CD4-positive, alpha-beta T cell (primary cell): ENCODE measurements at regions of chr9 and their contacts with region 1.

Region 1: DNA sequence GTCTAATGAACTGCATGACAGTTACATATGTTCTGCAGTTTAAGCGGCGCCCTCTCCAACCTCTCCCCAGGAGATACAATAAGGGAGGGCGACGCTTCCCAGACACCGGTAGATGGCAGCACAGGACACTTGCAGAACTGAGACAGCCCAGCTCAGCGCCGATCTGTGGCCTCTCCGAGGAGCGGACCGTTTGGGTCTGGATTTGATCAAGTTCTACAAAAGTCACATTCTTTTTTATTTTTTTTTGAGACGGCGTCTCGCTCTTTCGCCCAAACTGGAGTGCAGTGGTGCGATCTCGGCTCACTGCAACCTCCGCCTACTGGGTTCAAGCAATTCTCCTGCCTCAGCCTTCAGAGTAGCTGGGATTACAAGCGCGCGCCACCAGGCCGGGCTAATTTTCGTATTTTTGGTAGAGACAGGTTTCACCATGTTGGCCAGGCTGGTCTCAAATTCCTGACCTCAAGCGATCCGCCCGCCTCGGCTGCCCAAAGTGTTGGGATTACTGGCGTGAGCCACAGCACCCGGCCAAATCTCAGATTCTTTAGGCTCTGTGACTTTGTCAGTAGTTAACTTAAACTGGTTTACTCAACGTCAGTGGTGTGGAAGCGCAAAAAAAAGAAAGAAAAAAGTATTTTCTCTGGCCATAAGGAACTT is 1.4 kb upstream of the ATOSB start:
- DNase-seq: peak; percentile 77 to 96 (median 84)
- ATAC-seq: peak; percentile 67
- H3K4me3 ChIP-seq: peak overlapping the region; percentile 66
- H3K4me3 Mint-ChIP-seq: peak overlapping the region; percentile 94
- H3K27ac ChIP-seq: peak overlapping the region; percentile 81 to 83
- H3K27ac Mint-ChIP-seq: peak overlapping the region; percentile 79
- H3K4me1 ChIP-seq: peaks cover 46% of the 10 kb centered on the region
- H3K4me1 Mint-ChIP-seq: peaks cover 42% of the 10 kb centered on the region
- H3K27me3 ChIP-seq: no peaks in the 10 kb centered on the region
- H3K27me3 Mint-ChIP-seq: no peaks in the 10 kb centered on the region
- CTCF ChIP-seq: peak; percentile 90

Region 2: DNA sequence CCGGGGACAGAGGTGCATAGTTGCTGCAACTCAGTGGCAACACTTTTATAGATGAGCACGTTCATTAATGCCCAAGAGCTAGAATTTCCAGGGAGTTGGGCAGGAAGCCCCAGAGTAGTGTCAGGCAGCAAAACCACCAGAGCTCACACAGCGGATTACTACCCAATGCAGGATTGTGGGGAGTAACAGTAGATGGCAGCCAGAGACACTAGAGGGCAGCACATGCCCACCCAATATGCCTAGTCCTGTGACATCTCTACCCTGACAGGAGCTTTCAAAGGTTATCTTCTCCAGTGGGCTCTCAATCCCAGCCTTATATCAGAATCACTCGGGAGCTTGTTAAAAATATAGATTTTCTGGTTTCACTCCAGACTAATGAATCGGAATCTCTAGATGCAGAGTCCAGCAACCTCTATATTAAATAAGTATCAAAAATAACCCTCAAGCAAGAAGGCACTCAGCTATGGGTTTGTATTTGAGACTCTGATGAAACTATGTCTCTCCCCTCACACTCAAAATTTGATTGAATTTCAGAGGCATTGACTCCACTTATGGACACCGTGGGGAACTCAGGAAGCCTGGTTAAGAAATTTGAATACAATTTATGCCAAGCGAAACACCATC is 217.4 kb before region 1 on chr9:
- CTCF ChIA-PET with region 1: interaction called, 10 read pairs
- POLR2A ChIA-PET with region 1: no interaction called
- intact Hi-C with region 1: no loop called
- DNase-seq: peak; percentile 67 to 90 (median 76)
- ATAC-seq: peak; percentile 100
- H3K4me3 ChIP-seq: no peak overlapping the region
- H3K4me3 Mint-ChIP-seq: no peak overlapping the region
- H3K27ac ChIP-seq: no peak overlapping the region
- H3K27ac Mint-ChIP-seq: no peak overlapping the region
- H3K4me1 ChIP-seq: no peaks in the 10 kb centered on the region
- H3K4me1 Mint-ChIP-seq: no peaks in the 10 kb centered on the region
- H3K27me3 ChIP-seq: peaks cover 7 to 20% of the 10 kb centered on the region in 2 experiments
- H3K27me3 Mint-ChIP-seq: peaks cover 57% of the 10 kb centered on the region
- CTCF ChIP-seq: peak; percentile 88

Region 3: DNA sequence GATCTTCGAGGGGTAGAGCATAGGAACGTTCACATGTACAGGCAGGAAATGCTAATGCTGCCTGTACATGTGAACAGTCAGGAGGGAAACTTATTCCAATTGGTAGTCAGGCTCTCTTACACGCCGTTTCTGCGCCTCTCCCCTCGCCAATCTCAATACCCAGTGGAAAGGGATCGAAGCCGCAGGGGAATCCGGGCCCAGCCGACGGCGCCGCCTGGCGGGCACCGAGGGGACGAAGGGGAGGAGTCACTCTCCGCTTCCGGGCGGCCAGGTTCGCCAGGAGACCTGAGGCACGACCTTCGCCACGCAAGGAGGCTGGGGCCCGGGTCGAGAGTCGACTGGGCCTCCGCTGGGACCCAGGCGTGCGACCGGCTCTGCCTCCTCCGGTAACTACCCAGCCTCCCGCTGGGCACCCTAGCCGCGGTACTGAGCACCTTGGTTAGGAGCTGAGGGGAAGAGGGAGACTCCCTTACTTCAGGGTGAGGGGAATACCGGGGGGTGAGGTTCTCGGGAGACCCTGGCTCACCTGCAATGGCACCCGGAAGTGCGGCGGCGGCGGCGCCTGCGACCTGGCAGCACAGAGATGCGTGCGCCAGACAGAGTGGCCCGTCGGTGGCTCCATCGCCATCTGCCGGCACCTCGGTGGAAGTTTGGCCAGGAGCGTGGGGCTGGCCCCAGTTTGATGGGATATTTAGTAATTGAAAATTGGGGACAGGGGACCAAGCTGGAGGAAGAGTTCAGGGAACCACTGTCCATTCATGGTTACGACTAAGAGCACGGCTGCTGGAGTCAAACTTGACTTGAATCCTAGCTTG is 20.8 kb before region 1 on chr9 and contains the start of gene PIGO:
- CTCF ChIA-PET with region 1: interaction called, 15 read pairs
- POLR2A ChIA-PET with region 1: interaction called, 13 read pairs
- intact Hi-C with region 1: no loop called
- DNase-seq: peak; percentile 81 to 95 (median 88)
- ATAC-seq: peak; percentile 88
- H3K4me3 ChIP-seq: peak within 1 kb of the TSS; percentile 82
- H3K4me3 Mint-ChIP-seq: peak within 1 kb of the TSS; percentile 92
- H3K27ac ChIP-seq: peak within 1 kb of the TSS; percentile 96 to 99
- H3K27ac Mint-ChIP-seq: peak within 1 kb of the TSS; percentile 93
- H3K4me1 ChIP-seq: peaks cover 26% of the 10 kb centered on the region
- H3K4me1 Mint-ChIP-seq: peaks cover 43% of the 10 kb centered on the region
- H3K27me3 ChIP-seq: no peaks in the 10 kb centered on the region
- H3K27me3 Mint-ChIP-seq: no peaks in the 10 kb centered on the region
- CTCF ChIP-seq: peak; percentile 81
- total RNA-seq, gene PIGO: 17.5 to 18.9 TPM

Region 4: GRCh38 chr9:35258676-35259474 is 141.8 kb after region 1 on chr9:
- CTCF ChIA-PET with region 1: interaction called, 17 read pairs
- POLR2A ChIA-PET with region 1: interaction called, 8 read pairs
- intact Hi-C with region 1: loop called (anchors 1 kb)
- DNase-seq: peak; percentile 17 to 67 (median 34)
- ATAC-seq: peak; percentile 43
- H3K4me3 ChIP-seq: no peak overlapping the region
- H3K4me3 Mint-ChIP-seq: no peak overlapping the region
- H3K27ac ChIP-seq: no peak overlapping the region
- H3K27ac Mint-ChIP-seq: no peak overlapping the region
- H3K4me1 ChIP-seq: no peaks in the 10 kb centered on the region
- H3K4me1 Mint-ChIP-seq: no peaks in the 10 kb centered on the region
- H3K27me3 ChIP-seq: peaks cover 0 to 3% of the 10 kb centered on the region in 2 experiments
- H3K27me3 Mint-ChIP-seq: peaks cover 11% of the 10 kb centered on the region
- CTCF ChIP-seq: peak; percentile 64

Region 5: GRCh38 chr9:35603987-35604577 is 487.1 kb after region 1 on chr9:
- CTCF ChIA-PET with region 1: no interaction called
- POLR2A ChIA-PET with region 1: no interaction called
- intact Hi-C with region 1: loop called (anchors 5 kb)
- DNase-seq: peak; percentile 98 to 100 (median 99)
- ATAC-seq: peak; percentile 88
- H3K4me3 ChIP-seq: peak overlapping the region; percentile 94
- H3K4me3 Mint-ChIP-seq: peak overlapping the region; percentile 99
- H3K27ac ChIP-seq: peak overlapping the region; percentile 73 to 89
- H3K27ac Mint-ChIP-seq: peak overlapping the region; percentile 96
- H3K4me1 ChIP-seq: peaks cover 43% of the 10 kb centered on the region
- H3K4me1 Mint-ChIP-seq: peaks cover 33% of the 10 kb centered on the region
- H3K27me3 ChIP-seq: no peaks in the 10 kb centered on the region
- H3K27me3 Mint-ChIP-seq: no peaks in the 10 kb centered on the region
- CTCF ChIP-seq: peak; percentile 98